ENCODE measurements at regions of chr2 and their contacts with region 1.

Region 1: DNA sequence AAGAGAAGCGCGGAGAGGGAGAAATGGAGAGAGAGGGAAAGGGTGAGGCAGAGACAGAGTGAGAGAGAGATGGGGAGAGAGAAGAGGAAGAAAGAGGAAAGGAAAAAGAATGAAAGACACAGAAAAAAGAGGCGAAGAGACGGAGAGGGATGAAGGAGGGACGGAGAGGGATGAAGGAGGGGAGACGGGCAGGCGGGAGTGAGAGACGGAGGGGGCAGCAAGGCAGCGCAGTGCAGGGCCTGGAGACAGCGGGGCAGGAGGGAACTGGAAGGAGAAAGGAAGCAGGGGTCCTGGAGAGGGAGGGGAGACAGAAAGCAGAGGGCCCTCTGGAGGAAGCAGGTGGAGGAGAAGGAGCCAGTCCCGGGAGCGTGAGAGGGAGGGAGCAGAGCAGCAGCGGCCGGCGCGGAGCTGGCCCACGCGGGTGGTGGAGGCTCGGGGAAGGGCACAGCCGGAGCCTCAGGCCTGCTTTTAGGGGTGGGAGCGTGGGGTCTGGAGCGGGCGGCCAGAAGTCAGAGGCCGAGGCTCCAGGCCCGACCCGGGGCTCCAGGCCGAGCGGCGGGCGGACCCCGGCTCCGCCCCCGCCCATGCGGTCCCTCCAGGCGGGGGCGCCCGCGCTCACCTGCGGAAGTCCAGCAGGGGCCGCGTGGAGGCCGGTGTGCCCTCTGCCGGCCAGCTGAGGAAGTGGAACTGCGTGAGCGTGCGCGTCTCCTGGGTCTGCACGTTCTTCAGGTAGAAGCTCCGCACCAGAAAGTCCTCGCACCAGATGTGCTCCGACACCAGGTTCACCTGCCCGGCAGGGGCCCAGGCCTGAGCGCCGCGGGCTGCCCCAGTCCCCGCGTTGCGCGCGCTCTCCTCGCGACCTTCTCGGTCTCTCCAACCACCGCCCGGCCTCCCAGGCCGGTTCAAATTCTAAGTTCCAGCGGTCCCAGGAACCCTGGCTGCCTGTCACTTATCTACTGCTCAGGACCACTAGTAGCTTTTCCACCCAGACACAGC is 14.5 kb downstream of the PTPRN start:
- DNase-seq: peak in 1 of 2 donors; percentile 91
- H3K4me3 ChIP-seq: peak overlapping the region; percentile 62 to 67
- H3K27ac ChIP-seq: peak overlapping the region; percentile 83 to 86
- H3K4me1 ChIP-seq: peaks cover 0 to 16% of the 10 kb centered on the region in 2 donors
- H3K27me3 ChIP-seq: no peaks in the 10 kb centered on the region
- CTCF ChIP-seq: peak; percentile 97 to 99 (median 98)

Region 2: DNA sequence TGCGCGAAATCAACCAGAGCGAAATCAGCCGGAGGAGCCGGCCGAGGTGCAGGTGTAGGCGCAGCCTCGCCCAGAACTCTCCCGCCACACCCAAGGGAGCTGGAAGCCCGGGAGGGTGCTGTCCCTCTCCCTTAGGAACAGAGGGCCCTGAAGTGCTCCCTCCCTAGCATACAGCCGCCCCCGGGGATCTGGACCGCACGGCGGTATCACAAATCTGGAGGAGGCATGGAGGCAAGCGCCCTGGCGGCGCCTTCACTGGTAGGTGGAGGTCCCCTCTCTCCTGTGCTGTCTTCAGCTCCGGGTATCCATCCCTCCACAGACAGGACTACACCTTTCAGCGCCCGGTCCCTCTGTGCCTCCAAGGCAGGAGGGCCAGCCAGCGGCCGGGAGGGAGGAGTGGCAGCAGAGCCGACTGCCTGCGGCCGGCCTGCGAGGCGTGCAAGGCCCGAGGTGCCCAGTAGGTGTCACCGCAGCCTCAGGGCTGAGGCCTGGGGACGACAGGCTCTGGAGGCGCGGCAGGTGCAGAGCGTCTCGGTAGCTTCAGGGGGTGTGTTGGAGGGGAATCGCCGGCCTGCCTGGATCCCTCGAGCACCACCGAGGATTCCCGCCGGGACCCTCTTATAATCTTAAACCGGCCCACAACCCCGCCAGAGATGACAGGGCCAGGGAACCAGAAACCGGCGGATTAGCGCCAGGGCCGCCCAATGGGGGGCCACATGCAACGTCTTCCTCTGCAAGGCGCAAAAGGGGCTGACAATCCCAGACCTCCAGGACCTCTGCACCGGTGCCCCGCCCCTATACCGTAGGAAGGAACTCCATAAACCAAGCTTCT is 236.7 kb before region 1 on chr2:
- intact Hi-C with region 1: loop called (anchors 5 kb)
- DNase-seq: peak; percentile 18 to 74
- H3K4me3 ChIP-seq: peak overlapping the region in 1 of 2 donors; percentile 56
- H3K27ac ChIP-seq: no peak overlapping the region
- H3K4me1 ChIP-seq: peaks cover 29 to 31% of the 10 kb centered on the region in 2 donors
- H3K27me3 ChIP-seq: peaks cover 19% of the 10 kb centered on the region
- CTCF ChIP-seq: peak; percentile 89 to 94 (median 92)

Region 3: DNA sequence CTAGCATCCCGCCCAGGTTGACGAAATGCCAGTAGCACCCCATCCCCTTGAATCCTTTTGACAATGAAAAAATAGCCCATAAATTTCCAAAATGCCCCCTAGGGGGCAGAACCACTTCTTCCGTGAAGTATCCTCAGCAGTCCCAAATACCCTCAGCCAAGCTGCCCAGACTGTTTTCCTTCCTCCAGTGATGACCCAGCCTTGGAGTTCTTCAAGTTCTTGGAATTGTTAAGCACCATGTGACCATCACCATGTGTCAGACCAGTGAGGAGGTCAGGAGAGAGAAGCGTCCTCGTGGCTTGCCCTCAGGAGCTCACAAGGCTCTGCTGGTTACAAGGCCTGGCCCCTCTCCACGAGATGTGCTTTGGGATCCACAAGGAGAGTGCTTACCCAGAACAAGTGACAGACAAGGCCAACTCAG is 123.4 kb before region 1 on chr2:
- intact Hi-C with region 1: loop called (anchors 1 kb)
- DNase-seq: peak in 1 of 2 donors; percentile 81
- H3K4me3 ChIP-seq: no peak overlapping the region
- H3K27ac ChIP-seq: peak overlapping the region; percentile 58 to 69
- H3K4me1 ChIP-seq: peaks cover 0 to 20% of the 10 kb centered on the region in 2 donors
- H3K27me3 ChIP-seq: no peaks in the 10 kb centered on the region
- CTCF ChIP-seq: peak; percentile 48 to 66 (median 62)

Region 4: DNA sequence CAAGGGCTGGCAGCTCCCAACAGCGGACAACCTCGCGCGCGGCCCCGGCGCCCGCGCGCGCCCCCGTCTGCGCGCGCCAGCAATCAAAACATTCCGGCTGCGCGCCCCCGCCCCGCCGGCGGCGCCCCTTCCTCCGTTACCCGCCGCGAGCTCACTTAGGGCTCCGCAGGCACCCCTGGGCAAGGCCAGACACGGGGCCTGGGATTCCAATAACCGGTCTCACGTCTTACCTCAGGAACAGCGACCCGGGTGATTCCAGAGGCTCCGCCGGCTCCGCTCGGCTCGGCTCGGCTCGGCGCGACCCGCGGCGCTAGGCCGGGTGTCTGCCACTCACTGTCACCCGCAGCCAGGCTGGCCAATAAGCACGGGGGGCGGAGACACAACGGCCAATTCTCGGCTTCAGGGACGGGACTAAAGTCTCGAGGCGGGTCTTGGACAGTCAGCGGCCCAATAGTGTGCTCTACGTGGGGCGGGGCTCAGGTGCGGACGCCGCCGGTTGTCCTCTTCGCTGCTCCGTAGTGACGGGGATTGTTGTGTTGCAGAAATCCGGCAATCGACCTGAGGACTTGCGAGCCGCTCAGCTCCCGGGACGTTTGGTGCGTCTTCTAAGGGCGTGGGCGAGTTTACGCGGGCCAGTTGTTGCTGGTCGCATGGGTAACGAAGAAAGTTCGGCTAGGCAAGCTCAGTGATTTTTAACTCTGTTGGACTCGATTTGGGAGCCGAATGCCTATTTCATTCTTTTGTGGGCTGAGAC is 65.2 kb before region 1 on chr2 and contains the starts of genes ANKZF1 and ATG9A:
- intact Hi-C with region 1: loop called (anchors 1 kb)
- DNase-seq: peak; percentile 98 to 99
- H3K4me3 ChIP-seq: peak within 1 kb of the TSS; percentile 66 to 96
- H3K27ac ChIP-seq: peak within 1 kb of the TSS; percentile 93 to 97
- H3K4me1 ChIP-seq: peaks cover 4 to 23% of the 10 kb centered on the region in 2 donors
- H3K27me3 ChIP-seq: no peaks in the 10 kb centered on the region
- CTCF ChIP-seq: no peak
- total RNA-seq, gene ANKZF1: 53.1 TPM
- total RNA-seq, gene ATG9A: 135 TPM

Region 5: GRCh38 chr2:219253753-219254590 is 40.7 kb before region 1 on chr2 and contains the start of gene TUBA4A:
- intact Hi-C with region 1: loop called (anchors 2 kb)
- DNase-seq: peak; percentile 58 to 93
- H3K4me3 ChIP-seq: peak within 1 kb of the TSS; percentile 70 to 73
- H3K27ac ChIP-seq: peak within 1 kb of the TSS; percentile 96 to 99
- H3K4me1 ChIP-seq: peaks cover 15 to 39% of the 10 kb centered on the region in 2 donors
- H3K27me3 ChIP-seq: no peaks in the 10 kb centered on the region
- CTCF ChIP-seq: peak in 1 of 3 experiments; percentile 8
- total RNA-seq, gene TUBA4A: 71.1 TPM

Region 6: DNA sequence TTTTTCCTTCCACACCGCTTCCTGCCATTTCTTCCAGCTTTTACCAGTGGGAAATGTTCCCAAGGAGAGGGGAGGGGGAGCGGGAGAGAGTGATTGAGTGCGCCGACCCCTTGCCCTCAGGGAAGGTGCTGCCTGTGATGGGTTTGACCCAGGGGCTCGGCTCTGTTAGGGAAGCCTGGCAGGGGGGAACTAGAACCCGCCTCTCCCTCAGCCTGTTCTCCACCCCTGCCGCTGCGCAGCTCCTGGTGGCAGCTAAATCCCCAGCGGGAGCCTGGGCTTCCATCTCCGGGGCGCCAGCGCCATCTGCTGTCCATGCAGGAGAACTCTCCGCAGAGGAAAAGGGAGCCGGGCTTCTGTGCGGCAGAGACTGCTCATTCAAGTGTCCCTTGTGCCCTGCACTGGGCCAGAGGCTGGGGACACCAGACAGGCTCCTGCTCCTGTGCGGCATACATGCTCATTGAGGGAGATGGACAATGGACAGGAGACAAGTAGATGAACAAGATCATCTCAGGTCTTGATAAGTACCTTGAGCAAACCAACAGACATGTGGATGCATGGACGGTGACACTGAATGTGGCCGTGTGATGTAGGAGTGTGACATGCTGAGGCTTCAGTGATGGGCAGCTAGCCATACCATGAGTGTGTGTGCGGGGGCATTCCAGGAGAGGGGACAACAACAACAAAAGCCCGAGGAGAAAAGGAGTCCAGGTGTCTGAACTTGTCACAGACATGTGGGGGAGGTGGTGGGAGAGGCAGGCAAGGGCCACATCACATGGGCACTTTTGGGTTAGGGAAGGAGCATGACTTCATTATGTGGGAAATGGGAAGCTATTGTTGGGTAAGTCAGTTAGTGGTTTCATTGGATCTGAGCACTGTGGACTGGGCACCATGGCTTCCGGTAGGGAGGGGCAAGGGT is 235.7 kb after region 1 on chr2:
- intact Hi-C with region 1: loop called (anchors 10 kb)
- DNase-seq: peak in 1 of 2 donors; percentile 88
- H3K4me3 ChIP-seq: peak overlapping the region in 1 of 2 donors; percentile 55
- H3K27ac ChIP-seq: no peak overlapping the region
- H3K4me1 ChIP-seq: no peaks in the 10 kb centered on the region
- H3K27me3 ChIP-seq: no peaks in the 10 kb centered on the region
- CTCF ChIP-seq: peak; percentile 97 to 99 (median 98)